ENCODE measurements at regions of chr7 and their contacts with region 1.

Region 1: GRCh38 chr7:12686894-12687717 is at the start of gene ARL4A:
- DNase-seq: peak; percentile 100
- H3K4me3 ChIP-seq: peak within 1 kb of the TSS; percentile 79 to 82
- H3K27ac ChIP-seq: peak within 1 kb of the TSS; percentile 81 to 87
- H3K4me1 ChIP-seq: no peaks in the 10 kb centered on the region
- H3K27me3 ChIP-seq: no peaks in the 10 kb centered on the region
- CTCF ChIP-seq: peak; percentile 12 to 90 (median 55)
- POLR2A ChIP-seq: peak; percentile 93
- total RNA-seq, gene ARL4A: 34.3 to 37.3 TPM

Region 2: GRCh38 chr7:12638851-12639467 is 48.1 kb before region 1 on chr7:
- intact Hi-C with region 1: loop called (anchors 2 kb)
- DNase-seq: no peak
- H3K4me3 ChIP-seq: no peak overlapping the region
- H3K27ac ChIP-seq: no peak overlapping the region
- H3K4me1 ChIP-seq: peaks cover 5% of the 10 kb centered on the region
- H3K27me3 ChIP-seq: no peaks in the 10 kb centered on the region
- CTCF ChIP-seq: peak in 3 of 4 experiments; percentile 52 to 65 (median 63)
- POLR2A ChIP-seq: no peak

Region 3: DNA sequence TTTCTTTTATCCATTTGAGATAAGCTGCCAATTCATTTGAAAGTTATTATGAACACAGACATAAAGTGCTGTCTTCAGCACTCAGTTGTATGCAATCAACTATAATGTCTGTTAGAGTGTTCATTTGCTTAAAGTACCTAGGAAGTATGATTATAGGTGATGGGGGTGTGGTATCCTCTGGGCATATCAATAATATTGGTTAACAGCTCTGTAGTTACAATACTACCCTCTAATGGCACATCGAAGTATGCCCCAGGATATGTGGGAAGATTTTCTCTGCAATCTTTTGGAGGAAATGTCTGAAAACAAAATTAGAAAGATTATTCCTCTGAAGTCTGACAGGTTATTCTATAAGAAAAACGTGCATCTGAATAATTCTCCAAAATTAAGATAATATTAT is 430.0 kb after region 1 on chr7:
- intact Hi-C with region 1: loop called (anchors 5 kb)
- DNase-seq: no peak
- H3K4me3 ChIP-seq: no peak overlapping the region
- H3K27ac ChIP-seq: no peak overlapping the region
- H3K4me1 ChIP-seq: no peaks in the 10 kb centered on the region
- H3K27me3 ChIP-seq: no peaks in the 10 kb centered on the region
- CTCF ChIP-seq: peak in 3 of 4 experiments; percentile 9 to 46 (median 46)
- POLR2A ChIP-seq: no peak

Region 4: DNA sequence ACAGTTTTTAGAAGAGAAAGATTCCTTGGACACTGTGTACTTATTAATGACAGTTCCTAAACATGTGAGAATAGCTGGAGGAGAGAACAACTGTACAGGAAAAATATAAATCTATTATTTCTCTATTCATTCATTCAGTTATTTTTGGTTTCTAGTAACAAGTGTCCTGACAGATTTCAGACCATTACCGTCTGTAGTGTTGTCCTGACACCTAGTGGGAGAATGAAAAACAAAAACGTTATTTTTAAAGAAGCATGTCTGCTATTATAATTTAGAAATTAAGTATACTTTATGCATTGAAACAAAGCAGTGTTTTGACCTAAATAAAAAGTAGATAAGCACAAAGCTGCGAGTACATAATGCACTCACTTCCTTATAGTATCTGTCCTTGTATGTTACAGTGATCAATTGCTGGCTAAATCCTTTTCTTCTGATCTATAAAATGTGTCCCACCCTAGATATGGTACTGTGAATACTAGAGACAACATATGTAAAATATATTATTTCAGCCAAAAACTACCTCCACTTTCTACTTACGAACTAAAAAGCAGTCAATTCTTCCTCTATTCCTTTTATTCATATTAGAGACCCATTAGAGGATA is 575.9 kb after region 1 on chr7:
- intact Hi-C with region 1: loop called (anchors 2 kb)
- DNase-seq: no peak
- H3K4me3 ChIP-seq: no peak overlapping the region
- H3K27ac ChIP-seq: no peak overlapping the region
- H3K4me1 ChIP-seq: no peaks in the 10 kb centered on the region
- H3K27me3 ChIP-seq: no peaks in the 10 kb centered on the region
- CTCF ChIP-seq: peak; percentile 19 to 77 (median 67)
- POLR2A ChIP-seq: no peak